Activated CD8-positive, alpha-beta T cell treated with anti-CD3 and anti-CD28 coated beads for 36 hours (primary cell): ENCODE measurements at regions of chr1 and their contacts with region 1.

Region 1: GRCh38 chr1:155540000-155540874 is 22.4 kb downstream of the ASH1L start:
- DNase-seq: peak; percentile 21
- ATAC-seq: no peak
- H3K4me3 Mint-ChIP-seq: no peak overlapping the region
- H3K27ac Mint-ChIP-seq: peak overlapping the region; percentile 76
- H3K4me1 Mint-ChIP-seq: peaks cover 46% of the 10 kb centered on the region
- H3K27me3 Mint-ChIP-seq: no peaks in the 10 kb centered on the region
- CTCF ChIP-seq: no peak

Region 2: GRCh38 chr1:155527677-155528076 is 12.6 kb before region 1 on chr1:
- CTCF ChIA-PET with region 1: interaction called, 3 read pairs
- POLR2A ChIA-PET with region 1: interaction called, 10 read pairs
- intact Hi-C with region 1: no loop called
- DNase-seq: no peak
- ATAC-seq: no peak
- H3K4me3 Mint-ChIP-seq: no peak overlapping the region
- H3K27ac Mint-ChIP-seq: no peak overlapping the region
- H3K4me1 Mint-ChIP-seq: peaks cover 38% of the 10 kb centered on the region
- H3K27me3 Mint-ChIP-seq: no peaks in the 10 kb centered on the region
- CTCF ChIP-seq: no peak

Region 3: DNA sequence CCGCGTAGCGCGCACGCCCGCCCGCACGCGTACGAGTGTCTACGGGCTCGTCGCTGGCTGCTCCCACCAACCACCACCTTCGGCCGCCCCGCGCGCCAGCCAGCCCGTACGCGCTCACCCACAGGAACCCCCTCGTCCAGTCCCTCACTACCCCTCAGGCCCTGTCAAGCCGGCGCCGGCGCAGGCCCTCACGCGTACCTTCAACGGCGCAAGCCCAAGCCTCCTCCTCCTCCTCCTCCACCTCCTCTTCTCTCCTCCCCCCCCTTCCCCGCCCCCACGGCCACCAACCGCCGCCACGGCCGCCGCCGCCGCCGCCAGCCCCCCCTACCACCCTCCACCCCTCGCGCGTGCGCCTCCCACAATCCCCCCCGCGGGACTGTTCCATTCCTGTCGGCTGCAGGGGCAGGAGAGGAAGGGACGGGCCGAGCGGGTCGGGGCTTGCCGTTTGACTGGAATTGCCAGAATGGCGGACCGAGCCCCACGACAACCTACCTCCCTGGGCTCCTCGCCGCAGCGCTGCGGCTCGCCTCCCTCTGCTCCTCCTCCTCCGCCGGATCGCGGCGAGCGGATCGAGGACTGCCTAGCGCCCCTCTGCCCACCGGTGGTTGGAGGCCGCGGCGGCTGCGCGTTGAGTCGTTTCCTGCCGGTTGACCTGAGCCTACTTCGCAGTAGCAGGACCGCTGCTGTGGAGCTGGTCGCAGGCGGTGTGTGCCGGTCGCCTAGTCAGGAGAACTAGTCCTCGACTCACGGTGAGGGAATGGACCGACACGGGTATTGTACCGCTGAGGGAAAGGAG is 22.5 kb after region 1 on chr1 and contains the start of gene ASH1L:
- CTCF ChIA-PET with region 1: no interaction called
- POLR2A ChIA-PET with region 1: interaction called, 10 read pairs
- intact Hi-C with region 1: no loop called
- DNase-seq: peak; percentile 93
- ATAC-seq: peak; percentile 84
- H3K4me3 Mint-ChIP-seq: peak within 1 kb of the TSS; percentile 99
- H3K27ac Mint-ChIP-seq: peak within 1 kb of the TSS; percentile 98
- H3K4me1 Mint-ChIP-seq: peaks cover 32% of the 10 kb centered on the region
- H3K27me3 Mint-ChIP-seq: no peaks in the 10 kb centered on the region
- CTCF ChIP-seq: no peak
- total RNA-seq, gene ASH1L: 30.3 to 31.6 TPM